ENCODE measurements at regions of chr7 and their contacts with region 1.

Region 1: GRCh38 chr7:150368096-150368883 is at the start of gene REPIN1:
- DNase-seq: peak; percentile 97 to 99 (median 98)
- ATAC-seq: peak; percentile 76
- H3K4me3 ChIP-seq: peak within 1 kb of the TSS; percentile 79
- H3K27ac ChIP-seq: peak within 1 kb of the TSS; percentile 97
- H3K4me1 ChIP-seq: peaks cover 45 to 51% of the 10 kb centered on the region in 2 experiments
- H3K27me3 ChIP-seq: no peaks in the 10 kb centered on the region
- CTCF ChIP-seq: 0 out of 6 replicates have a peak, but pooled peaks of 1 of the 3 experiments have one; percentile 1
- EP300 ChIP-seq: peak; percentile 56
- POLR2A ChIP-seq: peak; percentile 74
- RAD21 ChIP-seq: peak in 1 of 2 experiments; percentile 5; a peak in 1 of 4 replicates
- polyA plus RNA-seq, gene REPIN1: 8.1 to 11.0 TPM

Region 2: GRCh38 chr7:150404805-150405583 is 36.7 kb after region 1 on chr7:
- CTCF ChIA-PET with region 1: no interaction called
- POLR2A ChIA-PET with region 1: interaction called, 20 read pairs
- in situ Hi-C with region 1: no loop called
- intact Hi-C with region 1: loop called (anchors 2 kb)
- DNase-seq: peak; percentile 96 to 98 (median 97)
- ATAC-seq: peak; percentile 87
- H3K4me3 ChIP-seq: peak overlapping the region; percentile 65
- H3K27ac ChIP-seq: peak overlapping the region; percentile 95
- H3K4me1 ChIP-seq: peaks cover 55 to 77% of the 10 kb centered on the region in 2 experiments
- H3K27me3 ChIP-seq: no peaks in the 10 kb centered on the region
- CTCF ChIP-seq: peak; percentile 42 to 66 (median 51)
- EP300 ChIP-seq: peak; percentile 77
- POLR2A ChIP-seq: peak; percentile 84
- RAD21 ChIP-seq: peak in 1 of 2 experiments; percentile 29; a peak in 2 of 4 replicates

Region 3: GRCh38 chr7:150481186-150481920 is 113.1 kb after region 1 on chr7:
- CTCF ChIA-PET with region 1: no interaction called
- POLR2A ChIA-PET with region 1: no interaction called
- in situ Hi-C with region 1: no loop called
- intact Hi-C with region 1: no loop called
- DNase-seq: no peak
- ATAC-seq: no peak
- H3K4me3 ChIP-seq: no peak overlapping the region
- H3K27ac ChIP-seq: no peak overlapping the region
- H3K4me1 ChIP-seq: no peaks in the 10 kb centered on the region; a peak in 1 of 5 replicates
- H3K27me3 ChIP-seq: peaks cover 29 to 38% of the 10 kb centered on the region in 2 experiments
- CTCF ChIP-seq: no peak
- EP300 ChIP-seq: no peak
- POLR2A ChIP-seq: no peak
- RAD21 ChIP-seq: no peak

Region 4: DNA sequence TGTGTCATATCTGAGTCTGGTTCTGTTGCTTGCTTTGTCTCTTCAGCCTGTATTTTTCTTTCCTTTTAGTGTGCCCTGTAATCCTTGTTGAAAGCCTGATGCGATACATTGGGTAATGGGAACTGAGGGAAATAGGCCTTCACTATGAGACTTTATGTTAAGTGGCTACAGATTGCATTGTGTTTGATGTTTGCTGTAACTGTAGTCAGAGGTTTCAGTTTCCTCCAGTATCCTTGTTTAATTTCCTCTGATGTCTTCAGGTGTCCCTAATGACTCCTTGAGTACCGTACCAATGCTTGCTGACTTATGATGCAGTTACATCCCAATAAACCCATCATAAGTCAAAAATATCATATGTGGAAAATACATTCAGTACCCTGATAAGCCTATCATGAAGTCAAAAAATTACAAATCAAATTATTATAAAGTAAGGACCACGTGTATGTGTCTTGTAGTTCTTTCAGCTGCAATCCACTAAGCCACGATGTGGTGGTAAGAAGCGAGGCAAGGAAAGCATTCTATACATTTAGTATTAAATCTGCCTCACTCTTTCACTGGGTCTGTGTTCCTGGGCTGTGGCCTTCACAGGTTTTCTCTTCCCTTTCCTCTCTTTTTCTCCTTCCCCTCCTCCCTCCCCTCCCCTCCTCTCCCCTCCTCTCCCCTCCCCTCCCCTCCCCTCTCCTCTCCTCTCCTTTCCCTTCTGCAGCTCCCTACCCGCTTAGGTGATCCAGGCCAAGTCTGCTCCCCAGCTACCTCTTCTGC is 277.1 kb after region 1 on chr7:
- CTCF ChIA-PET with region 1: no interaction called
- POLR2A ChIA-PET with region 1: no interaction called
- in situ Hi-C with region 1: no loop called
- intact Hi-C with region 1: no loop called
- DNase-seq: no peak
- ATAC-seq: no peak
- H3K4me3 ChIP-seq: no peak overlapping the region
- H3K27ac ChIP-seq: no peak overlapping the region
- H3K4me1 ChIP-seq: no peaks in the 10 kb centered on the region
- H3K27me3 ChIP-seq: peaks cover 0 to 5% of the 10 kb centered on the region in 2 experiments; a peak in 1 of 5 replicates
- CTCF ChIP-seq: no peak
- EP300 ChIP-seq: no peak
- POLR2A ChIP-seq: no peak
- RAD21 ChIP-seq: no peak

Region 5: GRCh38 chr7:150867605-150868004 is 499.3 kb after region 1 on chr7:
- CTCF ChIA-PET with region 1: no interaction called
- POLR2A ChIA-PET with region 1: no interaction called
- in situ Hi-C with region 1: no loop called
- intact Hi-C with region 1: no loop called
- DNase-seq: peak in 1 of 4 experiments; percentile 4
- ATAC-seq: no peak
- H3K4me3 ChIP-seq: no peak overlapping the region
- H3K27ac ChIP-seq: no peak overlapping the region
- H3K4me1 ChIP-seq: no peaks in the 10 kb centered on the region
- H3K27me3 ChIP-seq: peaks cover 40 to 59% of the 10 kb centered on the region in 2 experiments; a peak in 4 of 5 replicates
- CTCF ChIP-seq: no peak
- EP300 ChIP-seq: no peak
- POLR2A ChIP-seq: no peak
- RAD21 ChIP-seq: no peak

Measured in K562 (cell line).